Naive thymus-derived CD4-positive, alpha-beta T cell (primary cell): ENCODE measurements at regions of chr19 and their contacts with region 1.

Region 1: DNA sequence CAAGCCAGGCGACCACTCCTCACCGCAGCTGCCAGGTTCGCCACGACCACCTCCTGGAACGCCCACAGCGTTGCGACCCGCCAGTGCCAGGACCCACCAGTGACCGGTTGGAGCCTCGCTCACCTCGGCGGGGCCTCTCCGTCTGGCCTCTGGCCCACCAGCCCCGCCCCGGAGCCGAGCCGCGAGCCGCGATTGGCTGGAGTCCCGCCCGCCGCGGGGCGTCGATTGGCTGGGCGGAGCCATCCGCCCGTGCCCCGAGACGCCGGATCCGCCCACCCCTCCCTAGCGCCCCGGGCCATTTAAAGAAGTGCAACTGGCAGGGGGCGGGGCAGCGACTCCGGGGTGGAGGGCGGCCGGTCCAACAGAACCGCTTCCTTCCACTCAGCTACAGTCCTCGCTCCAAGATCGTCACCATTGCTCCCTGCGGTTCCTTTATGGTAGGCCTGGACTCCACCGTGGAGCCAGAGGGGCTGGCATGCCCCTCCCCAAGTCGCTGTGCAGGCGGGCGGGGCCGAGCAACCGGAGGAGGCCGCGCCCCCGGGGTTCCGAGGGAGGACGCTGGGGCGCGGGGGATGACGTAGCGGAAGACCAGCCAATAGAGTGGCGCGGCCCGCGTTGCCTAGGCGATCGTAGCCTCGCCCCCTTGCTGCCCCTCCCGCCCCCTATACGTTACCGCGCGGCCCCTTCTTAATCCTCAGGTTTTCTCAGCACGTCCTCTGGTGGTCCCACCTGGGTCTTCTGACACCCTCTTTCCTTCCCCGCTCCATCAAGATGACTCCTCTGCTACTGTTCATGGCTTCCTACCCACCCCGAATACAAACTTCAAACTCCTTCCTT is at the start of gene SERTAD3:
- DNase-seq: peak; percentile 94 to 99 (median 98)
- ATAC-seq: peak; percentile 82
- H3K4me3 ChIP-seq: peak within 1 kb of the TSS; percentile 97
- H3K4me3 Mint-ChIP-seq: peak within 1 kb of the TSS; percentile 96 to 100 (median 98)
- H3K27ac ChIP-seq: peak within 1 kb of the TSS; percentile 89
- H3K27ac Mint-ChIP-seq: peak within 1 kb of the TSS; percentile 94 to 99 (median 97)
- H3K4me1 ChIP-seq: peaks cover 8 to 12% of the 10 kb centered on the region in 2 donors
- H3K4me1 Mint-ChIP-seq: peaks cover 17 to 31% (median 21%) of the 10 kb centered on the region in 7 donors
- H3K27me3 ChIP-seq: no peaks in the 10 kb centered on the region
- H3K27me3 Mint-ChIP-seq: no peaks in the 10 kb centered on the region
- total RNA-seq, gene SERTAD3: 15.2 to 44.1 (median 17.8) TPM

Region 2: DNA sequence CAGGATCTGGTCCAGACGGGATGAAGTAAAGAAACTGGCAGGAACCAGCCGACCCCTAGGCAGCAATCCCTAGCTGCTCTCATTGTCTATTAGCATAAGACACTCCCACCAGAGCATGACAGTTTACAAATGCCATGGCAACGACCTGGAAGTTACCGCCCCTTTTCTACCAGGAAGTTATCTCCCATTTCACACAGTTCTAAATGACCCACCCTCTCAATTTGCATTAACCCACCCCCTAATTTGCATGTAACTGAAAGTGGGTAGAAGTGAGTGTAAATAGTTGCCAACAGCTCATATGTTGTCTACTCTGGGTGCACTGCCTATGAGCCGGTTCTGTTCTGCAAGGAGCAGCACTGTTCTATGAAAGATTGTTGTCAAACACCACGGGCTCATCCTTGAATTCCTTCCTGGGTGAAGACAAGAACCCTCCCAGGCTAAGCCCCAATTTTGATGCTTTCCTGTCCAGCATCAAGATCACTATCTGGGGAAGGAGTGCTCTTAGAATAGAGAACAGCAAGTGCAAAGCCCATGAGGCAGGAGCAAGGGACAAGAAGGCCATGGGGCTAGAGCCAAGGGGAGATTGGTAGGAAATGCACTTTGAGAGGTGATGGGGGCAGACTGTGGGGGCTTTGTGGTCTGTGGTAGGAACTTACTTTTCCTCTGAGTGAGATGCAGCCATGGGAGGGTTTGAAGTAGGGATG is 1398.1 kb before region 1 on chr19:
- CTCF ChIA-PET with region 1: no interaction called
- POLR2A ChIA-PET with region 1: no interaction called
- intact Hi-C with region 1: no loop called
- DNase-seq: no peak
- ATAC-seq: peak; percentile 31
- H3K4me3 ChIP-seq: no peak overlapping the region
- H3K4me3 Mint-ChIP-seq: no peak overlapping the region
- H3K27ac ChIP-seq: no peak overlapping the region
- H3K27ac Mint-ChIP-seq: peak overlapping the region in 1 of 9 donors; percentile 60
- H3K4me1 ChIP-seq: no peaks in the 10 kb centered on the region
- H3K4me1 Mint-ChIP-seq: no peaks in the 10 kb centered on the region
- H3K27me3 ChIP-seq: no peaks in the 10 kb centered on the region
- H3K27me3 Mint-ChIP-seq: peaks cover 0 to 3% (median 0%) of the 10 kb centered on the region in 5 donors

Region 3: DNA sequence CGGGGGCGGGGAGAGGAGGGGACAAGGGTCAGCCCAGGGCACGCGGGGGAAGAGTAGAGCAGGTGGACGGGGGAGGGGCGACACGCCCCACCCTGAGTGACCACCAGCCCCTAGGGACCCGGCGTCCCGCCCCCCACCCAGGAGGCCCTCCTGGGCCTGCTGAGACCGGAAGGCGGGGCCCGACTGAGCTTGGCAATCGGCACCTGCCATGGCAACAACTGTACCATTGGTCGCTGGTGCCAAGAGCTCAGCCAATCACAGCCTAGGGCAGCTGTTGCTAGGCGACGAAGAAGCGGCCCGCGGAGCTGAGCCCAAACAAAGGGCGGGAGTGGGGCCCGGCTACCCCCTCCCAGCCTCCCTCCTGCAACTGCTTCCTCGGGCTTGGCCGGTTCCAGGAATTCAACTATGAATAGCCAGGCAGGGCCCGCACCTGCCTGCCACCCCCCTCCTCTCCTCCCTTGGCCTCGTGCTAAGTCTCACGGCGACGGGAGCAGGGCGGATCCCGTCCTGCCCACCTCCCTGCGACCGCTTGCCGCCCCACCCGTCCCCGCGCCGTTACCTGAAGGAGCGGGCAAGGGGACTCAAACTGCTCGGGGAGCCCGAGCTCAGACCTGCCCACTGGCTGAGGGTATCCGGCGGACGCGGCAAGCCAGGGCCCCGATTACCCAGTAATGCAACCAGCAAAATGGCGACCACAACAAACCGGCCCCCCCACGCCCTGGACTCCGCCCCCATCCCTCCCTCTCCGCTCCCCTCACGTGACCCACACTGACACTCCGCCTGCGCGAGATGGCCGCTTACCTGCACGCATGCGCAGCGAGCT is 610.7 kb before region 1 on chr19 and contains the start of gene DYRK1B:
- CTCF ChIA-PET with region 1: no interaction called
- POLR2A ChIA-PET with region 1: no interaction called
- intact Hi-C with region 1: loop called in 1 of 2 experiments (anchors 5 kb)
- DNase-seq: peak; percentile 90 to 99 (median 98)
- ATAC-seq: peak; percentile 92
- H3K4me3 ChIP-seq: peak within 1 kb of the TSS; percentile 100
- H3K4me3 Mint-ChIP-seq: peak within 1 kb of the TSS; percentile 60 to 88 (median 81)
- H3K27ac ChIP-seq: peak within 1 kb of the TSS; percentile 96
- H3K27ac Mint-ChIP-seq: peak within 1 kb of the TSS; percentile 85 to 96 (median 92)
- H3K4me1 ChIP-seq: peaks cover 17 to 23% of the 10 kb centered on the region in 2 donors
- H3K4me1 Mint-ChIP-seq: peaks cover 19 to 37% (median 27%) of the 10 kb centered on the region in 7 donors
- H3K27me3 ChIP-seq: no peaks in the 10 kb centered on the region
- H3K27me3 Mint-ChIP-seq: no peaks in the 10 kb centered on the region
- total RNA-seq, gene DYRK1B: 12.3 to 38.9 (median 23.5) TPM

Region 4: GRCh38 chr19:39906820-39907611 is 537.4 kb before region 1 on chr19:
- CTCF ChIA-PET with region 1: no interaction called
- POLR2A ChIA-PET with region 1: no interaction called
- intact Hi-C with region 1: no loop called
- DNase-seq: no peak
- ATAC-seq: no peak
- H3K4me3 ChIP-seq: no peak overlapping the region
- H3K4me3 Mint-ChIP-seq: peak overlapping the region in 1 of 10 donors; percentile 4
- H3K27ac ChIP-seq: no peak overlapping the region
- H3K27ac Mint-ChIP-seq: peak overlapping the region in 3 of 9 donors; percentile 2 to 47 (median 18)
- H3K4me1 ChIP-seq: no peaks in the 10 kb centered on the region
- H3K4me1 Mint-ChIP-seq: peaks cover 5 to 25% (median 22%) of the 10 kb centered on the region in 7 donors
- H3K27me3 ChIP-seq: no peaks in the 10 kb centered on the region
- H3K27me3 Mint-ChIP-seq: no peaks in the 10 kb centered on the region

Region 5: GRCh38 chr19:40285353-40286234 is 158.8 kb before region 1 on chr19:
- CTCF ChIA-PET with region 1: no interaction called
- POLR2A ChIA-PET with region 1: no interaction called
- intact Hi-C with region 1: loop called (anchors 1 kb)
- DNase-seq: peak; percentile 84 to 100 (median 99)
- ATAC-seq: peak; percentile 89
- H3K4me3 ChIP-seq: peak overlapping the region; percentile 81
- H3K4me3 Mint-ChIP-seq: peak overlapping the region; percentile 84 to 97 (median 92)
- H3K27ac ChIP-seq: peak overlapping the region; percentile 97
- H3K27ac Mint-ChIP-seq: peak overlapping the region; percentile 96 to 100 (median 99)
- H3K4me1 ChIP-seq: peaks cover 13 to 38% of the 10 kb centered on the region in 2 donors
- H3K4me1 Mint-ChIP-seq: peaks cover 24 to 59% (median 49%) of the 10 kb centered on the region in 7 donors
- H3K27me3 ChIP-seq: no peaks in the 10 kb centered on the region
- H3K27me3 Mint-ChIP-seq: peaks cover 0 to 2% (median 0%) of the 10 kb centered on the region in 5 donors

Region 6: DNA sequence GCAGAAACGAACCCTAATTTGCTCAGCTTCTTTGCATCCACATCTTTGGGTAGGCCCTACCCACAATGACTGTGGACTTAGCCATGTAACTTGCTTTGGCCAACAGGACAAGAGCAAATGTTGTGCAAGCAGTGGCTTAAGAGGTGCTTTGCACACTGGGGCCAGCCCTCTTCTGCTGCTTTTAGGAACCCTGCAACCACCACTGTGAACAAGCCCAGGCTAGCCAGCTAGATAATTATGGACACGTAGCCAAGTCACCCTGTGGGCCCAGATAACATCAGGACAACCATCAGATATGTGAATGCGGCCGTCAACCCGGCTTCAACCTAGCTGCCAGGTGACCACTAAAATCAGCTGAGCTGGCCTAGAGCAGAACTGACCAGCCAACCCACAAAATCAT is 113.3 kb before region 1 on chr19:
- CTCF ChIA-PET with region 1: no interaction called
- POLR2A ChIA-PET with region 1: no interaction called
- intact Hi-C with region 1: no loop called
- DNase-seq: no peak
- ATAC-seq: peak; percentile 89
- H3K4me3 ChIP-seq: no peak overlapping the region
- H3K4me3 Mint-ChIP-seq: no peak overlapping the region
- H3K27ac ChIP-seq: no peak overlapping the region
- H3K27ac Mint-ChIP-seq: no peak overlapping the region
- H3K4me1 ChIP-seq: no peaks in the 10 kb centered on the region
- H3K4me1 Mint-ChIP-seq: peaks cover 0 to 5% (median 0%) of the 10 kb centered on the region in 7 donors
- H3K27me3 ChIP-seq: no peaks in the 10 kb centered on the region
- H3K27me3 Mint-ChIP-seq: no peaks in the 10 kb centered on the region

Region 7: DNA sequence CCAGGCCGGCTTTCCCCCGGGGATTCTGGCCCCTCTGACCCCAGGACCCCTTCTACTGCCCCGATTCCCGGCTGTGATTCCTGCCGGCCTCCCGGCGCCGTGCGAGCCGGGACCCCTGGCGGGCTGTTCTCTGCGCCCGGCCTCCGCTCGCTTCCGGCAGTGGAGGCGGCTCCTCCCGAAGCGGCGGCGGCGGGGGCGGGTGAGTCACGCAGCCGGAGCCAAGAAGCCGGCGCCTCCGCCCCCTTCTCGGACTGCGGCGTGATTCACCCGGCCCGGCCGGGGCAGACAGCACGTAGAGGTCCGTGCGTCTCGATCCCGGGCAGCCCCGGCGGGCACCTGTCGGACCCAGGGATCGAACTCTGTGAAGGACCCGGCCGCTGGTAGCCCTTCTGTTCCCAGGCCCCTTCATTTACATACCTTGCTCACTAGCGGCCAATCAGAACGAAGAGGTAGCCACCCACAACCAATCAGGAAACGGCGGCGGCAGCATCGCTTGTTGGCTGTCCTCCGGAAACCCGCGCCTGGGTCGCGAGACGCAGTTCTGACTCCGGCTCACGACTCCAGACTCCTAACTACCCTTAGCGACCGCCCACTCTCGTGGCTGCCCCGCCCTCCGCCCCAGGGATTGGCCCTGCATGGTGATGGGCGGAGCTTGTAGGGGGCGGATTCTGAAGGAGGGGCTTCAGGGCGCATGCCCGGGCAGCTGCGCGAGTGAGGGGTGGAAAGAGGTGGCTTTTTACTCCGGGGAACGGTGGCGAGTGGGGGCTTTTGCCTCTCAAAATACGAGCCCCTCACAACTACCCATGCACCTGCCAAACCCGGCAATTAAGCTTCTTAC is 18.7 kb before region 1 on chr19 and contains the start of gene SERTAD1:
- CTCF ChIA-PET with region 1: interaction called, 16 read pairs
- POLR2A ChIA-PET with region 1: interaction called, 66 read pairs
- intact Hi-C with region 1: loop called (anchors 1 kb)
- DNase-seq: peak; percentile 99 to 100 (median 100)
- ATAC-seq: peak; percentile 96
- H3K4me3 ChIP-seq: peak within 1 kb of the TSS; percentile 77
- H3K4me3 Mint-ChIP-seq: peak within 1 kb of the TSS; percentile 90 to 99 (median 96)
- H3K27ac ChIP-seq: peak within 1 kb of the TSS; percentile 87
- H3K27ac Mint-ChIP-seq: peak within 1 kb of the TSS; percentile 92 to 100 (median 98)
- H3K4me1 ChIP-seq: peaks cover 15 to 18% of the 10 kb centered on the region in 2 donors
- H3K4me1 Mint-ChIP-seq: peaks cover 12 to 38% (median 24%) of the 10 kb centered on the region in 7 donors
- H3K27me3 ChIP-seq: no peaks in the 10 kb centered on the region
- H3K27me3 Mint-ChIP-seq: peaks cover 0 to 2% (median 0%) of the 10 kb centered on the region in 5 donors
- total RNA-seq, gene SERTAD1: 8.1 to 30.9 (median 13.5) TPM

Region 8: GRCh38 chr19:40529093-40529954 is 84.9 kb after region 1 on chr19:
- CTCF ChIA-PET with region 1: no interaction called
- POLR2A ChIA-PET with region 1: no interaction called
- intact Hi-C with region 1: no loop called
- DNase-seq: peak; percentile 84 to 97 (median 89)
- ATAC-seq: peak; percentile 97
- H3K4me3 ChIP-seq: peak overlapping the region; percentile 72
- H3K4me3 Mint-ChIP-seq: peak overlapping the region; percentile 66 to 87 (median 81)
- H3K27ac ChIP-seq: no peak overlapping the region
- H3K27ac Mint-ChIP-seq: peak overlapping the region in 6 of 9 donors; percentile 36 to 90 (median 60)
- H3K4me1 ChIP-seq: peaks cover 9 to 16% of the 10 kb centered on the region in 2 donors
- H3K4me1 Mint-ChIP-seq: peaks cover 5 to 25% (median 12%) of the 10 kb centered on the region in 7 donors
- H3K27me3 ChIP-seq: peaks cover 0 to 3% of the 10 kb centered on the region in 2 donors
- H3K27me3 Mint-ChIP-seq: peaks cover 13 to 37% (median 24%) of the 10 kb centered on the region in 5 donors

Region 9: DNA sequence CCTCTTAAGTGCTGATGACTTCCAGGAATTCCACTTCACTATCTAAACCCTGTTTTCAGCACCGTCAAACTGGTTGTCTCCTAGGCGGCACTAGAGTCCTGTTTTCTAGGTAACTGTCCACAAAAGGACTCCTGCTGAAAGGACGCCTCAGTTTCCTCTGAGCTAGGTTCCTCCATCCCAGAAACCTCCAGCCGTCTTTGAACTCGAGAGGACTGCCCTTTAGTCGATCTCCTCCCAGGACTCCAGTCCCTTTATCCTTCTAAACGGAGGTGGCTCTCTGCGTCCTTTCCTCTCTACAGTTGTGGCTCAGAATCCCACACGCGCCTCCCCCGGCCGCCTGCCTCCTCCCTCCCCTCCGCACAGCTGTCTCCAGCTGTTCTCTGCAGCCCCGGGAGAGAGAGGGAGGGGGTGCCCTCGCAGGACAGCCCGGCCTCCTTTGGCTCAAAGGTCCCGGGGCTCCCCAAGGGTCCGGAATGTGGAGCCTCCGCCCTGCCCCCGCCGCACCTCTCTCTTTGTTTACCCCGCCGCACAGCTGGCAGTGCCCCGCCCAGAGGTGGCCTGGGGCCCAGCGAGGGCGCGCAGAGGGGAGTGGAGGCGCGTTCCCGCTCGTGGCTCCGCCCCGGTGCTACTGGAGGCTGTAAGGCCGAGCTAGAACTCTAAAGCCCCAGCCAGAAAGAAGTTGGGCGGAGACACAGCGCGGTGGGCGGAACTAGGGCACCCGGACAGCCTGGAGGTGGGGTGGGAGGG is 159.2 kb after region 1 on chr19:
- CTCF ChIA-PET with region 1: no interaction called
- POLR2A ChIA-PET with region 1: no interaction called
- intact Hi-C with region 1: loop called (anchors 1 to 2 kb)
- DNase-seq: peak; percentile 82 to 96 (median 93)
- ATAC-seq: peak; percentile 86
- H3K4me3 ChIP-seq: peak overlapping the region; percentile 72
- H3K4me3 Mint-ChIP-seq: peak overlapping the region; percentile 84 to 98 (median 88)
- H3K27ac ChIP-seq: peak overlapping the region; percentile 35
- H3K27ac Mint-ChIP-seq: peak overlapping the region; percentile 72 to 93 (median 86)
- H3K4me1 ChIP-seq: peaks cover 54 to 61% of the 10 kb centered on the region in 2 donors
- H3K4me1 Mint-ChIP-seq: peaks cover 20 to 84% (median 71%) of the 10 kb centered on the region in 7 donors
- H3K27me3 ChIP-seq: peaks cover 10 to 21% of the 10 kb centered on the region in 2 donors
- H3K27me3 Mint-ChIP-seq: peaks cover 24 to 39% (median 30%) of the 10 kb centered on the region in 5 donors

Region 10: GRCh38 chr19:40777937-40778705 is 333.7 kb after region 1 on chr19 and contains the start of gene RAB4B:
- CTCF ChIA-PET with region 1: no interaction called
- POLR2A ChIA-PET with region 1: no interaction called
- intact Hi-C with region 1: loop called in 1 of 2 experiments (anchors 1 kb)
- DNase-seq: peak; percentile 99 to 100 (median 100)
- ATAC-seq: peak; percentile 92
- H3K4me3 ChIP-seq: peak within 1 kb of the TSS; percentile 97
- H3K4me3 Mint-ChIP-seq: peak within 1 kb of the TSS; percentile 91 to 99 (median 96)
- H3K27ac ChIP-seq: peak within 1 kb of the TSS; percentile 92
- H3K27ac Mint-ChIP-seq: peak within 1 kb of the TSS; percentile 87 to 99 (median 98)
- H3K4me1 ChIP-seq: peaks cover 18 to 24% of the 10 kb centered on the region in 2 donors
- H3K4me1 Mint-ChIP-seq: peaks cover 31 to 49% (median 39%) of the 10 kb centered on the region in 7 donors
- H3K27me3 ChIP-seq: no peaks in the 10 kb centered on the region
- H3K27me3 Mint-ChIP-seq: no peaks in the 10 kb centered on the region
- total RNA-seq, gene RAB4B: 37.6 to 63.0 (median 52.5) TPM

Region 11: GRCh38 chr19:42244347-42245220 is 1800.2 kb after region 1 on chr19:
- CTCF ChIA-PET with region 1: no interaction called
- POLR2A ChIA-PET with region 1: no interaction called
- intact Hi-C with region 1: loop called (anchors 5 kb)
- DNase-seq: peak; percentile 76 to 93 (median 90)
- ATAC-seq: peak; percentile 51
- H3K4me3 ChIP-seq: peak overlapping the region; percentile 68
- H3K4me3 Mint-ChIP-seq: peak overlapping the region; percentile 91 to 98 (median 96)
- H3K27ac ChIP-seq: peak overlapping the region; percentile 73
- H3K27ac Mint-ChIP-seq: peak overlapping the region; percentile 84 to 99 (median 96)
- H3K4me1 ChIP-seq: peaks cover 28 to 38% of the 10 kb centered on the region in 2 donors
- H3K4me1 Mint-ChIP-seq: peaks cover 36 to 58% (median 54%) of the 10 kb centered on the region in 7 donors
- H3K27me3 ChIP-seq: no peaks in the 10 kb centered on the region
- H3K27me3 Mint-ChIP-seq: no peaks in the 10 kb centered on the region